ENCODE measurements at regions of chr12 and their contacts with region 1.

Region 1: GRCh38 chr12:76559400-76560085 is at the start of gene OSBPL8:
- DNase-seq: peak; percentile 94 to 99 (median 96)
- ATAC-seq: peak; percentile 67
- H3K4me3 ChIP-seq: peak within 1 kb of the TSS; percentile 79 to 92
- H3K4me3 Mint-ChIP-seq: peak within 1 kb of the TSS; percentile 96
- H3K27ac ChIP-seq: peak within 1 kb of the TSS; percentile 91 to 98
- H3K27ac Mint-ChIP-seq: peak within 1 kb of the TSS; percentile 96
- H3K4me1 ChIP-seq: peaks cover 40% of the 10 kb centered on the region
- H3K4me1 Mint-ChIP-seq: peaks cover 40% of the 10 kb centered on the region
- H3K27me3 ChIP-seq: no peaks in the 10 kb centered on the region
- H3K27me3 Mint-ChIP-seq: no peaks in the 10 kb centered on the region
- CTCF ChIP-seq: no peak
- total RNA-seq, gene OSBPL8: 112 to 115 TPM

Region 2: GRCh38 chr12:75390899-75391538 is 1168.5 kb before region 1 on chr12 and contains the start of gene GLIPR1L2:
- CTCF ChIA-PET with region 1: no interaction called
- POLR2A ChIA-PET with region 1: no interaction called
- intact Hi-C with region 1: loop called in 1 of 2 experiments (anchors 1 kb)
- DNase-seq: peak; percentile 77 to 96 (median 85)
- ATAC-seq: peak; percentile 88
- H3K4me3 ChIP-seq: peak within 1 kb of the TSS; percentile 70 to 72
- H3K4me3 Mint-ChIP-seq: peak within 1 kb of the TSS; percentile 91
- H3K27ac ChIP-seq: peak within 1 kb of the TSS; percentile 70 to 90
- H3K27ac Mint-ChIP-seq: peak within 1 kb of the TSS; percentile 95
- H3K4me1 ChIP-seq: peaks cover 26% of the 10 kb centered on the region
- H3K4me1 Mint-ChIP-seq: peaks cover 46% of the 10 kb centered on the region
- H3K27me3 ChIP-seq: no peaks in the 10 kb centered on the region
- H3K27me3 Mint-ChIP-seq: no peaks in the 10 kb centered on the region
- CTCF ChIP-seq: peak; percentile 53
- total RNA-seq, gene GLIPR1L2: not detected

Region 3: GRCh38 chr12:75712252-75712651 is 847.3 kb before region 1 on chr12:
- CTCF ChIA-PET with region 1: no interaction called
- POLR2A ChIA-PET with region 1: no interaction called
- intact Hi-C with region 1: no loop called
- DNase-seq: no peak
- ATAC-seq: no peak
- H3K4me3 ChIP-seq: no peak overlapping the region
- H3K4me3 Mint-ChIP-seq: no peak overlapping the region
- H3K27ac ChIP-seq: no peak overlapping the region
- H3K27ac Mint-ChIP-seq: no peak overlapping the region
- H3K4me1 ChIP-seq: no peaks in the 10 kb centered on the region
- H3K4me1 Mint-ChIP-seq: no peaks in the 10 kb centered on the region
- H3K27me3 ChIP-seq: no peaks in the 10 kb centered on the region
- H3K27me3 Mint-ChIP-seq: peaks cover 2% of the 10 kb centered on the region
- CTCF ChIP-seq: no peak

Region 4: DNA sequence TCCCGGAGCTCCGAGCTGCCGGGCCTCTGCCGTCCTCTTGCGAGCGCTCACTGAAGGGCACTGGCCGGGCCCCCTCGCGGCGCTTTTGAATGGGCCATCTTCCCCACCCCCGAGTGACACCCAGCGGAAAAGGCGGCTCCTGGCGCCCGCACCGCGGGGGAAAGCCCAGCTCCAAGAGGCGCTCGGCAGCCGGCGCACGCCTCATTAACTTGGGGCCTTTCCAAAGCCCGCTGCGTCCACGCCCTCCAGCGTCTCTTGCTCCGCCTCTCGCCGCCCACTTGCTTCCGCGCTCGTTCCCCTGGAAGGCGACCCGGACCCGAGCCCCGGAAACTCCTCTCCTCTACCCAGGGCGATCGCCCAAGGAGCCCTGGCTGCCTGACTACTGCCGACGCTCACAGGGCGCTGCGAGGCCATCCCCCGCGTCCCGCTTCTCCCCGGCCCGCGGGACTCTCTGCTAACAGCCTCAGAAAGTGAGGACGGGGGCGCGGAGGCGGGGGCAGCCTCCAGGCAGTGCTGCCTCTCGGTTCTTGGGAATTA is 527.9 kb before region 1 on chr12 and contains the start of gene PHLDA1:
- CTCF ChIA-PET with region 1: no interaction called
- POLR2A ChIA-PET with region 1: interaction called, 7 read pairs
- intact Hi-C with region 1: loop called in 1 of 2 experiments (anchors 5 kb)
- DNase-seq: peak; percentile 78 to 96 (median 88)
- ATAC-seq: peak; percentile 85
- H3K4me3 ChIP-seq: peak within 1 kb of the TSS; percentile 73 to 81
- H3K4me3 Mint-ChIP-seq: peak within 1 kb of the TSS; percentile 94
- H3K27ac ChIP-seq: peak within 1 kb of the TSS; percentile 63 to 76
- H3K27ac Mint-ChIP-seq: peak within 1 kb of the TSS; percentile 80
- H3K4me1 ChIP-seq: peaks cover 20% of the 10 kb centered on the region
- H3K4me1 Mint-ChIP-seq: peaks cover 28% of the 10 kb centered on the region
- H3K27me3 ChIP-seq: no peaks in the 10 kb centered on the region
- H3K27me3 Mint-ChIP-seq: peaks cover 2% of the 10 kb centered on the region
- CTCF ChIP-seq: peak; percentile 40
- total RNA-seq, gene PHLDA1: 5.6 to 5.8 TPM

Region 5: GRCh38 chr12:76329163-76329562 is 230.4 kb before region 1 on chr12:
- CTCF ChIA-PET with region 1: no interaction called
- POLR2A ChIA-PET with region 1: no interaction called
- intact Hi-C with region 1: no loop called
- DNase-seq: no peak
- ATAC-seq: no peak
- H3K4me3 ChIP-seq: no peak overlapping the region
- H3K4me3 Mint-ChIP-seq: no peak overlapping the region
- H3K27ac ChIP-seq: no peak overlapping the region
- H3K27ac Mint-ChIP-seq: no peak overlapping the region
- H3K4me1 ChIP-seq: no peaks in the 10 kb centered on the region
- H3K4me1 Mint-ChIP-seq: no peaks in the 10 kb centered on the region
- H3K27me3 ChIP-seq: no peaks in the 10 kb centered on the region
- H3K27me3 Mint-ChIP-seq: peaks cover 26% of the 10 kb centered on the region
- CTCF ChIP-seq: no peak

Region 6: GRCh38 chr12:76489737-76490136 is 69.8 kb before region 1 on chr12:
- CTCF ChIA-PET with region 1: no interaction called
- POLR2A ChIA-PET with region 1: interaction called, 3 read pairs
- intact Hi-C with region 1: loop called in 1 of 2 experiments (anchors 5 kb)
- DNase-seq: no peak
- ATAC-seq: no peak
- H3K4me3 ChIP-seq: no peak overlapping the region
- H3K4me3 Mint-ChIP-seq: no peak overlapping the region
- H3K27ac ChIP-seq: no peak overlapping the region
- H3K27ac Mint-ChIP-seq: peak overlapping the region; percentile 25
- H3K4me1 ChIP-seq: no peaks in the 10 kb centered on the region
- H3K4me1 Mint-ChIP-seq: peaks cover 38% of the 10 kb centered on the region
- H3K27me3 ChIP-seq: no peaks in the 10 kb centered on the region
- H3K27me3 Mint-ChIP-seq: no peaks in the 10 kb centered on the region
- CTCF ChIP-seq: no peak

Region 7: GRCh38 chr12:76548222-76548837 is 11.2 kb before region 1 on chr12:
- CTCF ChIA-PET with region 1: no interaction called
- POLR2A ChIA-PET with region 1: interaction called, 4 read pairs
- intact Hi-C with region 1: loop called in 1 of 2 experiments (anchors 1 kb)
- DNase-seq: no peak
- ATAC-seq: no peak
- H3K4me3 ChIP-seq: no peak overlapping the region
- H3K4me3 Mint-ChIP-seq: no peak overlapping the region
- H3K27ac ChIP-seq: no peak overlapping the region
- H3K27ac Mint-ChIP-seq: no peak overlapping the region
- H3K4me1 ChIP-seq: peaks cover 69% of the 10 kb centered on the region
- H3K4me1 Mint-ChIP-seq: peaks cover 89% of the 10 kb centered on the region
- H3K27me3 ChIP-seq: no peaks in the 10 kb centered on the region
- H3K27me3 Mint-ChIP-seq: no peaks in the 10 kb centered on the region
- CTCF ChIP-seq: no peak

Region 8: DNA sequence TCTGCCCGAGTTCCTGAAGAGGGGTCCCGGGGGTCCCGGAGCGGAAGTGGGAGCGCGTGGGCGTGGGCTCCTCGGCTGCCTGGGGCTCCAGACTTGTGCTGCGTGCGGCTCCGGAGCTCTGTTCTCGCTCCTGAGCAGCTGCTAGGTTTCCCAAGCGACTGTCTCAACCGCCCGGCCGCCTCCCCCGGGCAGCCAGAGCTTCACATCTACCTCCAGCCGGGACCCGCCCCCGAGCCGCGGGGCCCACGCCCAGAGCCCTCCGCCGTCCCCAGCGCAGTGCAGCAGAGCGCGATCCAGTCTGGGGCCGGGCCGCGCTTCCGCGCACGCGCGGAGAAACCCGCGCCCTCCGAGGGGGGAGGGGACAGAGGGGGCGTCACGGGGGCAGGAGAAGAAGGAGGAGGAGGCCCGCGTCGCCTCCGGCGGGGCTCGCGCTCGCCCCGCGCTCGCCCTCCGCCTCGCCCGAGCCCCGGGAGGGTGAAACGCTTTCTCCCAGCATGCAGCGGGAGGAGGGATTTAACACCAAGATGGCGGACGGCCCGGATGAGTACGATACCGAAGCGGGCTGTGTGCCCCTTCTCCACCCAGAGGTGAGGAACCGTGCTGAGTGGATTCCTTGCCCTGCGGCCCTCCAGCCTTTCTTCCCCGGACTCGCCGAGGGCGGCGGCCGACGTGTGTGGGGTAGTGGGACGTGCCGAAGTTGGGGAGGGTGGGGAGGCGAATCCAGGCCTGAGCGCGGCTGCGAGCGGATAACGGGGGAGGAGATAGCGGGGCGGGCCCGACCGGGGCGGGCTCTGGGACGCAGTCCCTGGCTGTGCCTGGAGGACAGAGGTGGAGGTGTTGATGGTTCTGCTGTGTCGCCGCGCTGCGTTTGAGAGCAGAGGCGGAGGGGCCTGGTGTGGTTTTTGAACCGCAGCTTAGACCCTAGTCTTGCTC is 204.5 kb after region 1 on chr12 and contains the start of gene ZDHHC17:
- CTCF ChIA-PET with region 1: interaction called, 6 read pairs
- POLR2A ChIA-PET with region 1: interaction called, 10 read pairs
- intact Hi-C with region 1: loop called (anchors 1 kb)
- DNase-seq: peak; percentile 89 to 96 (median 93)
- ATAC-seq: peak; percentile 82
- H3K4me3 ChIP-seq: peak within 1 kb of the TSS; percentile 73 to 99
- H3K4me3 Mint-ChIP-seq: peak within 1 kb of the TSS; percentile 98
- H3K27ac ChIP-seq: peak within 1 kb of the TSS; percentile 87 to 94
- H3K27ac Mint-ChIP-seq: peak within 1 kb of the TSS; percentile 99
- H3K4me1 ChIP-seq: peaks cover 26% of the 10 kb centered on the region
- H3K4me1 Mint-ChIP-seq: peaks cover 47% of the 10 kb centered on the region
- H3K27me3 ChIP-seq: no peaks in the 10 kb centered on the region
- H3K27me3 Mint-ChIP-seq: no peaks in the 10 kb centered on the region
- CTCF ChIP-seq: no peak
- total RNA-seq, gene ZDHHC17: 38.1 to 40.3 TPM